H1 (cell line): ENCODE measurements at regions of chr12 and their contacts with region 1.

Region 1: DNA sequence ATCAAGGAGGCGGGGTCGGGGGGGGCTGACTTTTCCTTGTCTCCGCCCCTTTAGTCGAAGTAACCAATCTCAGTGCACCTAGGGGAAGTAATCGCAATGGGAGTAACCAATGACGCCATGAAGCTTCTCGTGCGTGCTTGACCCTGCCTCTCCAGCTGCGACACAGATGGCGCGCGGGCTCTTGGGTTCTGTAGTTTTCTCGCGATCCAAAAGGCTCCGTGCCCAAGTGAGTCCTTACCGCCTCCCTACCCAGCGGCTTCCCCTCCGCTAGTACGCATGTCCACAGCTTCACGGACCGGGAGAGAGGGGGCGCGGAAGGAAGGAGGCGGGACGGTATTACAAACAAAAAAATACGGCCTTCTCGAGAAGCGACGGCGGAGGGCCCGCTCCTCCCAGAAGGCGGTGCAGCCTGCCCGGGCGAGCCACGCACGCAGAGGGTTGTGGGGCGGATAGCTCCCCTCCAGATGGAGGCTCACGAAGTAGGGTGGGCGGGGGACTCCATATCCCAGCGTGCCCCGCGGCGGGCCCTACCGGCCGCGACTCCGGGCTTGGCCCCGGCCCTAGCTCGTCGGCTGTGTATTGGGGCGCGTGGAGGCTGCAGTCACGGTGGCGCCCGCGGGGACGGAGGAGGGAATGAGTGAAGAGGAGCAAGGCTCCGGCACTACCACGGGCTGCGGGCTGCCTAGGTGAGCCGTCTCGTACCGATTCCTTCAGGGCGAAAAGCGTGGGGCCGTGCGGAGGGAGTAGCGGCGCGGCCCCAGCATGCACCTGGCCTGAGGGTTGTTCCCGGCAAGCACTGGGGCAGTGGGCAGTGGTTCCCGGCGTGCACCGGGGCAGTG is at the start of gene TARBP2:
- DNase-seq: peak; percentile 95 to 97
- H3K4me3 ChIP-seq: peak within 1 kb of the TSS; percentile 55 to 91 (median 77)
- H3K27ac ChIP-seq: peak within 1 kb of the TSS; percentile 91
- H3K4me1 ChIP-seq: peaks cover 9 to 41% (median 20%) of the 10 kb centered on the region in 4 experiments
- H3K27me3 ChIP-seq: no peaks in the 10 kb centered on the region
- CTCF ChIP-seq: no peak
- EP300 ChIP-seq: 0 out of 3 replicates have a peak, but pooled peaks of 1 of the 2 experiments have one; percentile 12
- POLR2A ChIP-seq: peak; percentile 66 to 86
- RAD21 ChIP-seq: no peak
- total RNA-seq, gene TARBP2: 66.1 and 69.9 TPM in 2 replicates

Region 2: GRCh38 chr12:53518381-53518780 is 17.4 kb after region 1 on chr12:
- CTCF ChIA-PET with region 1: interaction called, 3 read pairs
- POLR2A ChIA-PET with region 1: interaction called, 3,397 read pairs
- DNase-seq: no peak
- H3K4me3 ChIP-seq: no peak overlapping the region
- H3K27ac ChIP-seq: no peak overlapping the region
- H3K4me1 ChIP-seq: peaks cover 0 to 3% (median 0%) of the 10 kb centered on the region in 4 experiments; a peak in 1 of 7 replicates
- H3K27me3 ChIP-seq: no peaks in the 10 kb centered on the region
- CTCF ChIP-seq: no peak
- EP300 ChIP-seq: no peak
- POLR2A ChIP-seq: no peak
- RAD21 ChIP-seq: no peak